GM12878 (cell line): ENCODE measurements at regions of chr1 and their contacts with region 1.

Region 1: GRCh38 chr1:150168960-150169601 is 19.4 kb downstream of the PLEKHO1 start:
- DNase-seq: no peak
- ATAC-seq: peak; percentile 78
- H3K4me3 ChIP-seq: no peak overlapping the region
- H3K27ac ChIP-seq: no peak overlapping the region
- H3K4me1 ChIP-seq: peaks cover 28% of the 10 kb centered on the region
- H3K27me3 ChIP-seq: no peaks in the 10 kb centered on the region
- CTCF ChIP-seq: peak; percentile 77 to 88 (median 87)
- EP300 ChIP-seq: no peak
- POLR2A ChIP-seq: no peak
- RAD21 ChIP-seq: peak; percentile 94

Region 2: DNA sequence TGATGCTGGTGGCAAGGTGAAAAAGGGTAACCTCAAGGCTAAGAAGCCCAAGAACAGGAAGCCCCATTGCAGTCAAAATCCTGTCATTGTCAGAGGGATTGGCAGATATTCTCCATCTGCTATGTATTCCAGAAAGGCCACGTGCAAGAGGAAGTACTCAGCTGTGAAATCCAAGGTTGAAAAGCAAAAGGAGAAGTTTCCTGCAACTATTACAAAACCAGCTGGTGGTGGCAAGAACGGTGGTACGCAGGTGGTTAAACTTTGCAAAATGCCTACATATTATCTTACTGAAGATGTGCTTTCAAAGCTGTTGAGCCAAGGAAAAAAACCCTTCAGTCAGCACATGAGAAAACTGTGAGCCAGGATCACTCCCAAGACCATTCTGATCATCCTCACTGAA is 115.2 kb before region 1 on chr1:
- CTCF ChIA-PET with region 1: interaction called, 16 read pairs
- POLR2A ChIA-PET with region 1: no interaction called
- RAD21 ChIA-PET with region 1: interaction called, 6 read pairs
- SMC1A ChIA-PET with region 1: interaction called, 18 read pairs
- in situ Hi-C with region 1: no loop called
- intact Hi-C with region 1: no loop called
- DNase-seq: no peak
- ATAC-seq: no peak
- H3K4me3 ChIP-seq: no peak overlapping the region
- H3K27ac ChIP-seq: no peak overlapping the region
- H3K4me1 ChIP-seq: peaks cover 4% of the 10 kb centered on the region
- H3K27me3 ChIP-seq: no peaks in the 10 kb centered on the region
- CTCF ChIP-seq: no peak
- EP300 ChIP-seq: no peak
- POLR2A ChIP-seq: no peak
- RAD21 ChIP-seq: no peak

Region 3: DNA sequence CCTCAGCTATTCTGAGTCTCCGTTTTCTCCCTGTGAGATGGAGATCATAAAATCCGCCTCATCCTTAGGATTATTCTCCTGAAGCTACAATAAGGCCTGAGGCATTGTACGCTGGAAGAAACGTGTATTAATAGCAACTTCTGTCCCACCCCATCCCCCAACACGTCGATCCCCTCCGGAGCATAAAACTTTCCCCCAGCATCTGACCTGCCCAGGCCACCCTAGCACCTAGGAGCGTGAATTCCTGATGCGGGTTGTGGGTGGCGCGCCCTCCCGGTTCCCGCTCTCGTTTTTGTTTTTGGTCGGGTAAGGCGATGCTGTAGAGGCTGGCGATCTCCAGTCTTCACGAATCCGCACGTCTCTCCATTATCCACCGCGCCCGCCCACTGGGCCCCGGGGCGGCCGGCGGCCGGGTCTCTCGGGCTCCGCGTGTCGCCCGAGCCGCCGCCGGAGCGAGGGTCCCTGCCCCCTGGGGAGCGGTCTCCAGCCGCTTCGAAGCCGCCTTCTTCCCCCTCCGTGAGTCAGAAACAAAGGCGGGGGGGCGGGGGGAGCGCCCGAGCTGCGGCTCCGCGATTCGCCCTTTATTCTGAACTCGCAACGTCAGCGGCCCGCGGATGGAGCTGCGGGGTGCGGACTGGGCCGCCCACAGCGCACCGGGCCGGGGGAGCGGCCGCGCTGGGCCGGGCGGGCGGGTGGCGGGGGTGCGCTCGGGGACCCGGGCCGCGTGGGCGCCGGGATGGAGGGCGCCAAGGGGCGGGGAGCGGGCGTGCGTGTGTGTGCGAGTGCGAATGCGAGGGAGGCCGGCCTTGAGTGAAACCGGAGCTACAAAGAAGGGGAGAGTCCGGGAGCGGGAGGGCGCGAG is 19.6 kb before region 1 on chr1 and contains the start of gene PLEKHO1:
- CTCF ChIA-PET with region 1: interaction called, 78 read pairs
- POLR2A ChIA-PET with region 1: interaction called, 120 read pairs
- RAD21 ChIA-PET with region 1: interaction called, 65 read pairs
- SMC1A ChIA-PET with region 1: interaction called, 15 read pairs
- in situ Hi-C with region 1: no loop called
- intact Hi-C with region 1: no loop called
- DNase-seq: no peak
- ATAC-seq: peak; percentile 68
- H3K4me3 ChIP-seq: peak within 1 kb of the TSS; percentile 100
- H3K27ac ChIP-seq: peak within 1 kb of the TSS; percentile 99
- H3K4me1 ChIP-seq: peaks cover 20% of the 10 kb centered on the region
- H3K27me3 ChIP-seq: no peaks in the 10 kb centered on the region
- CTCF ChIP-seq: no peak
- EP300 ChIP-seq: no peak
- POLR2A ChIP-seq: peak; percentile 79
- RAD21 ChIP-seq: no peak
- polyA plus RNA-seq, gene PLEKHO1: 5.3 to 12.9 TPM

Region 4: GRCh38 chr1:150207281-150207971 is 38.3 kb after region 1 on chr1:
- CTCF ChIA-PET with region 1: no interaction called
- POLR2A ChIA-PET with region 1: no interaction called
- RAD21 ChIA-PET with region 1: no interaction called
- SMC1A ChIA-PET with region 1: no interaction called
- in situ Hi-C with region 1: no loop called
- intact Hi-C with region 1: no loop called
- DNase-seq: no peak
- ATAC-seq: no peak
- H3K4me3 ChIP-seq: no peak overlapping the region
- H3K27ac ChIP-seq: no peak overlapping the region
- H3K4me1 ChIP-seq: no peaks in the 10 kb centered on the region
- H3K27me3 ChIP-seq: no peaks in the 10 kb centered on the region
- CTCF ChIP-seq: no peak
- EP300 ChIP-seq: no peak
- POLR2A ChIP-seq: no peak
- RAD21 ChIP-seq: no peak